ENCODE measurements at regions of chr7 and their contacts with region 1.

Region 1: DNA sequence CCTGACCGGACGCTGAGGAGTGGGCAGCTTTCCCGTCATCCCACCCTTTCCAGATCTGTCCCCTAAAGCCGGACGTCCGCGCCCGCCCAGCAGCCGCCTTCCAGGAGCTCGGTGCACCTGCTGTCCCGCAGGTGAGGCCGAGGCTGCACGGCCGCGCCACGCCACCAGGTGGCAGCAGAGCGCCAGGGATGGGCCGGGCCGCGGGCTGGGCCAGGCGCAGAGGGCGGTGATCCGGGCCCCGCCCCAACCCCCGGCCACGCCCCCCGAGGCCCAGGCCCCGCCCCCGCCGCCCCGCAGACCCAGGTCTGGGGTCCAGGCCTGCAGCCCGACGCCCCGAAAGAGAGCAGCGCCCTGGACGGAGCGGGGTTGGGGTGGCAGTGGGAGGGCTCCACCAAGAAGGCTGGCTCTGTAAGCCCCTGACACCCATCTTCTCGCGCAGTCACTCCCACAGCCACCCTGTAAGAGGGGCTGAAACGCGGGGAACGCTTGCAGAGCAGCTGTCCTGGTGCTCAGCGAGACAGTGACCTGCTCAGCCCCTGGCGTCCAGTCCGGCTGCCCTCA is 32.2 kb downstream of the FOXL3 start:
- DNase-seq: no peak
- ATAC-seq: peak; percentile 99
- H3K4me3 ChIP-seq: no peak overlapping the region
- H3K27ac ChIP-seq: no peak overlapping the region
- H3K4me1 ChIP-seq: no peaks in the 10 kb centered on the region
- H3K27me3 ChIP-seq: no peaks in the 10 kb centered on the region
- CTCF ChIP-seq: peak; percentile 63 to 85 (median 74); a peak in 5 of 6 replicates
- EP300 ChIP-seq: no peak
- POLR2A ChIP-seq: no peak
- RAD21 ChIP-seq: peak; percentile 91

Region 2: GRCh38 chr7:207418-208129 is 114.6 kb before region 1 on chr7:
- CTCF ChIA-PET with region 1: no interaction called
- POLR2A ChIA-PET with region 1: no interaction called
- RAD21 ChIA-PET with region 1: no interaction called
- SMC1A ChIA-PET with region 1: no interaction called
- in situ Hi-C with region 1: no loop called
- intact Hi-C with region 1: no loop called
- DNase-seq: no peak
- ATAC-seq: no peak
- H3K4me3 ChIP-seq: no peak overlapping the region
- H3K27ac ChIP-seq: no peak overlapping the region
- H3K4me1 ChIP-seq: no peaks in the 10 kb centered on the region
- H3K27me3 ChIP-seq: no peaks in the 10 kb centered on the region
- CTCF ChIP-seq: no peak
- EP300 ChIP-seq: no peak
- POLR2A ChIP-seq: no peak
- RAD21 ChIP-seq: no peak

Region 3: DNA sequence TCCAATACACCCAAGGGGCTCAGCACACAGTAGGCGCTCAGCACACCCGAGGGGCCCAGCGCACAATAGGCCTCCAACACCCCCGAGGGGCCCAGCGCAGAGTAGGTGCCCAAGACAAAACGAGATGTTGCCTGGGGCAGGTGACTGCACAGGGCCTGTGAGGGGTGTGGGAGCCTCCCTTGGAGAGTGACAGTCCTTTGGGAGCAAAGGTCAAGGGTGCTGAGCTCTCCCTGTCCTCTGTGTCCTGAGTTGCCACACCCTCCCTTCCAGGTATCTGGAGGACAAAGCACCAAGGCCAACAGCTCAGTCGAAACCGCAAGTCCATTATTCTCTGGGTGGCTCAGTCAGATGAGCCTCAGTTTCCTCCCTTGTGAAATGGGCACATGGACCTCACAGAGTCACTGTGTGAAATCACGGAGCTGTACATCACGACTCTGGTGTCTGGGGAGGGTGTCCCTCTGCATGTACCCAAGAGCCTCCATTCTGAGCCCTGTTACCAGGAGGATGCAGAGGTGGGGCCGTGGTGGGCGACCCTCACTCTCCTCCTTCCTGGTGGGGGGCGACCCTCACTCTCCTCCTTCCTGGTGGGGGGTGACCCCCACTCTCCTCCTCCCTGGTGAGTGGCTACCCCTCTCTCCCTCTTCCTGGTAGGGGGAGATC is 49.1 kb after region 1 on chr7:
- CTCF ChIA-PET with region 1: no interaction called
- POLR2A ChIA-PET with region 1: no interaction called
- RAD21 ChIA-PET with region 1: no interaction called
- SMC1A ChIA-PET with region 1: no interaction called
- in situ Hi-C with region 1: no loop called
- intact Hi-C with region 1: no loop called
- DNase-seq: no peak
- ATAC-seq: no peak
- H3K4me3 ChIP-seq: no peak overlapping the region
- H3K27ac ChIP-seq: no peak overlapping the region
- H3K4me1 ChIP-seq: no peaks in the 10 kb centered on the region; the same call in 1 of the 2 replicates
- H3K27me3 ChIP-seq: no peaks in the 10 kb centered on the region
- CTCF ChIP-seq: no peak
- EP300 ChIP-seq: no peak
- POLR2A ChIP-seq: no peak
- RAD21 ChIP-seq: no peak

Region 4: GRCh38 chr7:774161-775109 is 452.2 kb after region 1 on chr7:
- CTCF ChIA-PET with region 1: interaction called, 6 read pairs
- POLR2A ChIA-PET with region 1: no interaction called
- RAD21 ChIA-PET with region 1: interaction called, 3 read pairs
- SMC1A ChIA-PET with region 1: interaction called, 4 read pairs
- in situ Hi-C with region 1: loop called (anchors 5 kb)
- intact Hi-C with region 1: loop called (anchors 5 kb)
- DNase-seq: no peak
- ATAC-seq: peak; percentile 90
- H3K4me3 ChIP-seq: no peak overlapping the region
- H3K27ac ChIP-seq: no peak overlapping the region
- H3K4me1 ChIP-seq: no peaks in the 10 kb centered on the region
- H3K27me3 ChIP-seq: no peaks in the 10 kb centered on the region
- CTCF ChIP-seq: peak; percentile 73 to 78 (median 76); a peak in 5 of 6 replicates
- EP300 ChIP-seq: no peak
- POLR2A ChIP-seq: no peak
- RAD21 ChIP-seq: peak; percentile 71

Region 5: GRCh38 chr7:964401-965231 is 642.4 kb after region 1 on chr7:
- CTCF ChIA-PET with region 1: no interaction called
- POLR2A ChIA-PET with region 1: no interaction called
- RAD21 ChIA-PET with region 1: no interaction called
- SMC1A ChIA-PET with region 1: no interaction called
- in situ Hi-C with region 1: loop called (anchors 5 kb)
- intact Hi-C with region 1: no loop called
- DNase-seq: no peak
- ATAC-seq: peak; percentile 47
- H3K4me3 ChIP-seq: no peak overlapping the region
- H3K27ac ChIP-seq: no peak overlapping the region
- H3K4me1 ChIP-seq: peaks cover 8% of the 10 kb centered on the region
- H3K27me3 ChIP-seq: no peaks in the 10 kb centered on the region
- CTCF ChIP-seq: no peak
- EP300 ChIP-seq: no peak
- POLR2A ChIP-seq: peak; percentile 59
- RAD21 ChIP-seq: no peak

Measured in GM12878 (cell line).